PC-9 (cell line): ENCODE measurements at regions of chr3 and their contacts with region 1.

Region 1: DNA sequence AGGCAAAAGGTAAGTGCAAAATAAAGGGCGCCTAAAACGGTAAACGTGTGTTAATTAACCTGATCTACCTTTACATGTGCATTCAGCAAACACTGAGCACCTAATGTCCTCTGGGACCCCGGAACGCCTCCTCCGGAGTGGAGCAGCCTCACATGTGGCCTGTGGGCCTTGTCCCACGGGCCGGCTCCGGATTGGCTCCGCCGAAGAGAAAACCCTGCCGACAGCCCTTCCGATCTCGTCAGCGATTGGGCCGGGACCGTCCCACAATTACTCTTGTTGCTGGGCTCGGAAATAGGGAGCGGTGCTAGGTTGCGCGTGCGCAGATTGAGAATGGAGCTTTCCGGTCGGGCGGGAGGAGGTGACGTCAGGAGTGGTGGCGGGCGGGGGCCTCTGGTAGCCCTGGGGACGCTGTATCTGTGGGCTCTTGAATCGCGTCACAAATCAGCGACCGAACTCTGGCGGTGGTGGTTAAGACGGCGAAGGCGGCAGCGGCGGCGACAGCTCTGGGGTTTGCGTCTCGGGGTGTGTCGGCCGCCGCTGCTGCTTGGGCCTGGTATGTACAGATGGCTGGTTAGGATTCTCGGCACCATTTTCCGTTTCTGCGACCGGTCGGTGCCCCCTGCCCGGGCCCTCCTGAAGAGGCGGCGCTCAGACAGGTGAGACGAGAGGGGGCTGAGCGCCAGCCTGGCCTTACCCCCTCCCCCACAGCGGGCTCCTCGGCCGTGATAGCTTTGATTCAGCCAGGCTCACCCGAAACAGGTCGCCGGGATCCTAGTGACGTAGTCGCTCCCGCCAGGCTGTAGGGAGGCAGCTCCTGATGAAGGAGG is at the start of gene SENP2:
- DNase-seq: peak; percentile 99 to 100
- H3K4me3 ChIP-seq: peak within 1 kb of the TSS; percentile 78
- H3K27ac ChIP-seq: peak within 1 kb of the TSS; percentile 73
- H3K4me1 ChIP-seq: peaks cover 18% of the 10 kb centered on the region
- H3K27me3 ChIP-seq: no peaks in the 10 kb centered on the region
- CTCF ChIP-seq: no peak
- total RNA-seq, gene SENP2: 66.5 and 89.5 TPM in 2 replicates

Region 2: DNA sequence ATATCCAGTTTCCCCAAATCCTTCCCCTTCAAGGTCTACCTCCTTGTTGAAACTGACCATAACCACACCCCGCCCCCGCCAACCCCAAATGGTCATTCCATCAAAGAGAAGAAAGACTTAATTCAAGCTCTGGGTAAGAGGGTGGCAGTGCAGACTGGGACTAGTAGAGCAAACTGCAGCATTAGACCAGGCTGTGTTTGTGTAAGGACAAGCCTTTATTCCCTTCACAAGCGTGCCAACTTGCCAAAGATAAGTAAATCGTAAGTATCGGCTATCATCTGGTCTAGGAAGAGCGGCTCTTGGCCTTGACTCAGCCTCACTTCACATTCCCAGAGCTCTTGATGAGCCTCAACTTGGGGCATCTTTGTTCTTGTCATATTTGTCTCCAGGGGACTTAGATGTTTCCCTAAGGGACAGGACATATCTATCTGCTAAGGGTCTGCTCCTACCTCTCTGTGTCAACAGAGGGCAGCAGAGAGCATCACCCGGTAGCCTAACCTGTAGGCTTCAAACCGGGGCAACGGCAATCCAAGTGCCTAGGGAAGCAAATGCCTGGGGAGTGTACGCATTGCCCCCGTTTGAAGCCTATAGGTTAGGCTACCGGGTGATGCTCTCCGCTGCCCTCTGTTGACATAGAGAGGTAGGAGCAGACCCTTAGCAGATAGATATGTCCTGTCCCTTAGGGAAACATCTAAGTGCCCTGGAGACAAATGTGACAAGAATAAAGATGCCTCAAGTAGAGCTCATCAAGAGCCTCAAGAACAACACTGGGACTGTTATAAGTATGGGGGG is 232.1 kb before region 1 on chr3:
- CTCF ChIA-PET with region 1: no interaction called
- POLR2A ChIA-PET with region 1: no interaction called
- intact Hi-C with region 1: loop called (anchors 5 kb)
- DNase-seq: peak; percentile 78 to 82
- H3K4me3 ChIP-seq: no peak overlapping the region
- H3K27ac ChIP-seq: no peak overlapping the region
- H3K4me1 ChIP-seq: no peaks in the 10 kb centered on the region
- H3K27me3 ChIP-seq: no peaks in the 10 kb centered on the region
- CTCF ChIP-seq: peak; percentile 92

Region 3: GRCh38 chr3:185479373-185479945 is 106.6 kb before region 1 on chr3:
- CTCF ChIA-PET with region 1: no interaction called
- POLR2A ChIA-PET with region 1: interaction called, 10 read pairs
- intact Hi-C with region 1: no loop called
- DNase-seq: no peak
- H3K4me3 ChIP-seq: no peak overlapping the region
- H3K27ac ChIP-seq: no peak overlapping the region
- H3K4me1 ChIP-seq: no peaks in the 10 kb centered on the region
- H3K27me3 ChIP-seq: no peaks in the 10 kb centered on the region
- CTCF ChIP-seq: no peak

Region 4: DNA sequence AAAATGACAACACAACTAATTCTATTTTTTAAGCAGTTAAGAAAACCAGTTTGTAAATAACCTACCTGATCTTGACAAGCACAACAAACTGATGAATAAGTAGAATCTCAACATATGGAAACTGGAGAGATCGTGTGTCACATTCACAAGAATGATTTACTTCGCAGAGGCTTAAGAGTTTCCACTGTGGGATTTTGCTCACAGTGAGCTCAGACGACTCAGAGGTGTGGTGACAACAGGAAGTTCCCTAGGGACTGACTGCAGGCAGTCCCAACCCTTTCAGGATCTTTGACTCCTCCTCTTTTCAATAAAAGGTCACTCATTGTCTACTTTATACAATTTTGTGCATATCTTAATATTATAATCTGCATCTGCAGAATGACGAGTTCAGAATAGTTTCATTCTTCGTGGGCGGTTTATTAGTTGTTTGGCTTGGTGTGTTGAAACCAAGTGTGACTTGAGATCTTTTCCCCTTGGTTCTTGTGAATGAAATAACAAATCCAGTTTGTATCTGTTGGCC is 33.7 kb before region 1 on chr3 and contains the start of gene LIPH:
- CTCF ChIA-PET with region 1: no interaction called
- POLR2A ChIA-PET with region 1: interaction called, 24 read pairs
- intact Hi-C with region 1: no loop called
- DNase-seq: peak; percentile 61 to 96
- H3K4me3 ChIP-seq: peak within 1 kb of the TSS; percentile 61
- H3K27ac ChIP-seq: peak within 1 kb of the TSS; percentile 93
- H3K4me1 ChIP-seq: peaks cover 81% of the 10 kb centered on the region
- H3K27me3 ChIP-seq: no peaks in the 10 kb centered on the region
- CTCF ChIP-seq: no peak
- total RNA-seq, gene LIPH: 38.4 and 44.7 TPM in 2 replicates

Region 5: DNA sequence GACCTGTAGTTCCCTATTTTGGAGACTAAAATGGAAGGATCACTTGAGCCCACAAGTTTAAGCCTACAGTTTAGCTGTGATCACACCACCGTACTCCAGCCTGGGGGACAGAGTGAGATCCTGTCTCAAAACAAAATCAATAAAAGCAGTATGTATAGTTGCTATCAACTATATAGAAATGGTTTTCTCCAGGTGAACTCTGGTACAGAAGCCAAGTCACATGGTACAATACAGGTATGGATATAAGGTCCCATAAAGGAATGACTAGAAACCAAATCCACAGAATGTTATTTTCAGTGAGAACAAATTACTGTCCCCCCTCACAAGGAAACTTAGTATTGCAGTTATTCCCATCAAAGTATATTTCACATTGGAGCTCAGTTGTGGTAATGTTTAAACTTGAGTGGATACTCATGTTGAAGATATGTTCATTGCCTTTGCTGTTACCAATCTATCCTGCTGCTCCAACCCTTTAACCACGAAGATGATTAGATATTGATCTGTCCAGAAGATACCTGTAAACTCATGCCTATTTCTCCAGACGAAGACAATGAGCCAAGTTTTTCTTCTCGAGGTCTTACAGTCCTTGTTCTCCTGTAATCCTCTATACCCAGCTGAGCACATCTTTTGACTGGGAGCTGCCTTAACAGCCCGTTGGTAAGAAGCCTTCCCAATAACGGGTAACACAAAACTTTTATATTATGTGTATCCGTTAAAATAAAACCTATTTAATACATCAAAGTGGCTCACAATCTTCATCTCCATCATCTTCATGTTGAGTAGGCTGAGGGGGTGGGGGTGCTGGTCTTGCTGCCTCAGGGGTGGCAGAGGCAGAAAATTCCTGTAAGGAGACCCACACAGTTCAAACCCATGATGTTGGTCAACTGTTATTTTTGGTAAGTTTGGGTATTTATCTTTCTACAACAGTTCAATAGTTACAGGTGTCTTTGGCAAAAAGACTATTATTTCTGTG is 327.1 kb after region 1 on chr3:
- CTCF ChIA-PET with region 1: no interaction called
- POLR2A ChIA-PET with region 1: interaction called, 10 read pairs
- intact Hi-C with region 1: no loop called
- DNase-seq: no peak
- H3K4me3 ChIP-seq: no peak overlapping the region
- H3K27ac ChIP-seq: 0 out of 2 replicates have a peak overlapping the region, but pooled peaks have one; percentile 15
- H3K4me1 ChIP-seq: no peaks in the 10 kb centered on the region
- H3K27me3 ChIP-seq: no peaks in the 10 kb centered on the region
- CTCF ChIP-seq: no peak